ENCODE measurements at regions of chr1 and their contacts with region 1.

Region 1: GRCh38 chr1:37514350-37515184 is at the start of gene MEAF6:
- DNase-seq: peak; percentile 65 to 92 (median 79)
- ATAC-seq: peak; percentile 94 to 97 (median 96)
- H3K4me3 ChIP-seq: peak within 1 kb of the TSS; percentile 85 to 88
- H3K4me3 Mint-ChIP-seq: peak within 1 kb of the TSS; percentile 89 to 96 (median 94)
- H3K27ac ChIP-seq: peak within 1 kb of the TSS; percentile 89
- H3K27ac Mint-ChIP-seq: peak within 1 kb of the TSS; percentile 98 to 99
- H3K4me1 ChIP-seq: peaks cover 14 to 17% of the 10 kb centered on the region in 2 experiments
- H3K4me1 Mint-ChIP-seq: peaks cover 46 to 49% (median 47%) of the 10 kb centered on the region in 3 donors
- H3K27me3 ChIP-seq: no peaks in the 10 kb centered on the region
- H3K27me3 Mint-ChIP-seq: no peaks in the 10 kb centered on the region
- total RNA-seq, gene MEAF6: 54.0 to 86.3 (median 84.9) TPM

Region 2: DNA sequence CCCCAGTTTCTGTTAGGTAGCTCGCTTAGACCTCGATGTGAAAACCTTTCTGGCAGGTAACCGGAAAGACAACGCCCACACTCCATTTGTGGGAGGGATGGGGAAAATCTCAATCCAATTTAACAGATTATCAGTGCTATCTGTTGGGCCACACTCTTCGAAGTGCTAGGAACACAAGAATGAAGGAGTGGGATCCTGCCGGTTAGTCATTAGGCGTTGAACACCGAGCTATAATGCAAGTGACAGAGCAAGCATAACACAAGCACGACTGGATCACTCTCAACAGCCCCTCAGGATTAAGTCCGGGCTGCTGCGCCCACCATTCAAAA is 39.0 kb after region 1 on chr1:
- CTCF ChIA-PET with region 1: interaction called in 1 of 2 experiments, 5 read pairs
- POLR2A ChIA-PET with region 1: interaction called in 1 of 2 experiments, 11 read pairs
- DNase-seq: peak in 1 of 35 experiments; percentile 11
- ATAC-seq: peak in 2 of 4 experiments; percentile 7 to 17
- H3K4me3 ChIP-seq: peak overlapping the region; percentile 90 to 91
- H3K4me3 Mint-ChIP-seq: peak overlapping the region; percentile 98 to 100 (median 99)
- H3K27ac ChIP-seq: peak overlapping the region; percentile 74
- H3K27ac Mint-ChIP-seq: peak overlapping the region; percentile 95 to 99
- H3K4me1 ChIP-seq: peaks cover 7 to 26% of the 10 kb centered on the region in 2 experiments
- H3K4me1 Mint-ChIP-seq: peaks cover 42 to 49% (median 45%) of the 10 kb centered on the region in 3 donors
- H3K27me3 ChIP-seq: peaks cover 0 to 5% of the 10 kb centered on the region in 2 experiments
- H3K27me3 Mint-ChIP-seq: peaks cover 0 to 4% of the 10 kb centered on the region in 2 donors

Region 3: DNA sequence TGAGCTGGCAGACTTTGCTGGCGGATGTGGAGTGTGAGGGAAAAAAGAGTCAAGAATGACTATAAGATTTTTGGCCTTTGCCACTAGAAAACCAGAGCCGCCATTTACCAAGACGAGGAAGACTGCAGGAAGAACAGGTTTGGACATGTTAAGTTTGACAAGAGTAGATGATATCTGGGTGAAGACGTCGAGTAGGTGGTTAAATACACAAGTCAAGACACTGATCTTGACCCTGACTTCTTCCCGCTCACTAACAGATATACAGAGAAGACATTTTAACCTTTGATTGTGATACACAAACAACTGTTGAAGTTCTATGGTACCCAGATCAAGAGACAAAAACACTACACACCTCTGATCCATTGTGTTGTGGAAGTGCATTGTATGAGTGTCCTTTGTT is 320.2 kb after region 1 on chr1:
- CTCF ChIA-PET with region 1: interaction called in 1 of 2 experiments, 12 read pairs
- POLR2A ChIA-PET with region 1: no interaction called
- DNase-seq: no peak
- ATAC-seq: no peak
- H3K4me3 ChIP-seq: no peak overlapping the region
- H3K4me3 Mint-ChIP-seq: no peak overlapping the region
- H3K27ac ChIP-seq: no peak overlapping the region
- H3K27ac Mint-ChIP-seq: no peak overlapping the region
- H3K4me1 ChIP-seq: no peaks in the 10 kb centered on the region
- H3K4me1 Mint-ChIP-seq: no peaks in the 10 kb centered on the region
- H3K27me3 ChIP-seq: no peaks in the 10 kb centered on the region
- H3K27me3 Mint-ChIP-seq: no peaks in the 10 kb centered on the region